ENCODE measurements at regions of chr12 and their contacts with region 1.

Region 1: DNA sequence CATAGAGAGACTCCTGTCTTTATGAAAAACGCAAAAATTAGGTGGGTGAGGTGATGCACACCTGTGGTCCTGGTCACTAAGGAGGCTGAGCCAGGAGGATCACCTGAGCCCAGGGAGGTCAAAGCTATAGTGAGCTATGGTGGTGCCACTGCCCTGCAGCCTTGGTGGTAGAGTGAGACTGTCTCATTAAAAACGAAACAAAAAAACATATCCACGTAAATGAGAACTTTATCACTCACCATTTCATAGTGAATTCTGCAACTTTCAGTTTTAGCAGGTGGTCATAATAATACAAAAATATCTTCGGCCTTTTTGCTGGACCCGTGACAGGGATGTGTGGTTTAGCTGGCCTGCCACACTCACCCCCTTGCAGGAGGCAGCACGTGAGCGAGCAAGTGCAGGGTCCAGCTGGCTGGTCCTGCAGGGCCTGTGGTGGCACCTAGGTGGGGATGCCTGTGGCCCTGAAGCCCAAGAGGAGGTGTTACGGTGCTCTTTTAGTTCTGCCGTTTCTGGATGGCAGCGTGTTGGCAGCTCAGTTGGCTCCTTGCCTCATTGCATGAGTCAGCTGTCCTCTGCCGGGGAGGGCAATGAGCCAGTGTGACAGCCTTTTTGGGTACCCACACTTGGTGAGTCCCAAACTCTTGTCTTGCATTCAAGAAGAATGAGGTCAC is 1330.7 kb upstream of the TMEM132C start:
- DNase-seq: no peak
- ATAC-seq: no peak
- H3K4me3 ChIP-seq: no peak overlapping the region
- H3K4me3 Mint-ChIP-seq: no peak overlapping the region
- H3K27ac ChIP-seq: no peak overlapping the region
- H3K27ac Mint-ChIP-seq: no peak overlapping the region
- H3K4me1 ChIP-seq: no peaks in the 10 kb centered on the region
- H3K4me1 Mint-ChIP-seq: no peaks in the 10 kb centered on the region
- H3K27me3 ChIP-seq: no peaks in the 10 kb centered on the region
- H3K27me3 Mint-ChIP-seq: no peaks in the 10 kb centered on the region
- CTCF ChIP-seq: no peak

Region 2: GRCh38 chr12:126926023-126926594 is 10.2 kb before region 1 on chr12:
- CTCF ChIA-PET with region 1: no interaction called
- POLR2A ChIA-PET with region 1: interaction called, 11 read pairs
- intact Hi-C with region 1: no loop called
- DNase-seq: no peak
- ATAC-seq: no peak
- H3K4me3 ChIP-seq: no peak overlapping the region
- H3K4me3 Mint-ChIP-seq: no peak overlapping the region
- H3K27ac ChIP-seq: no peak overlapping the region
- H3K27ac Mint-ChIP-seq: no peak overlapping the region
- H3K4me1 ChIP-seq: no peaks in the 10 kb centered on the region
- H3K4me1 Mint-ChIP-seq: no peaks in the 10 kb centered on the region
- H3K27me3 ChIP-seq: no peaks in the 10 kb centered on the region
- H3K27me3 Mint-ChIP-seq: no peaks in the 10 kb centered on the region
- CTCF ChIP-seq: no peak